ENCODE measurements at regions of chr1 and their contacts with region 1.

Region 1: DNA sequence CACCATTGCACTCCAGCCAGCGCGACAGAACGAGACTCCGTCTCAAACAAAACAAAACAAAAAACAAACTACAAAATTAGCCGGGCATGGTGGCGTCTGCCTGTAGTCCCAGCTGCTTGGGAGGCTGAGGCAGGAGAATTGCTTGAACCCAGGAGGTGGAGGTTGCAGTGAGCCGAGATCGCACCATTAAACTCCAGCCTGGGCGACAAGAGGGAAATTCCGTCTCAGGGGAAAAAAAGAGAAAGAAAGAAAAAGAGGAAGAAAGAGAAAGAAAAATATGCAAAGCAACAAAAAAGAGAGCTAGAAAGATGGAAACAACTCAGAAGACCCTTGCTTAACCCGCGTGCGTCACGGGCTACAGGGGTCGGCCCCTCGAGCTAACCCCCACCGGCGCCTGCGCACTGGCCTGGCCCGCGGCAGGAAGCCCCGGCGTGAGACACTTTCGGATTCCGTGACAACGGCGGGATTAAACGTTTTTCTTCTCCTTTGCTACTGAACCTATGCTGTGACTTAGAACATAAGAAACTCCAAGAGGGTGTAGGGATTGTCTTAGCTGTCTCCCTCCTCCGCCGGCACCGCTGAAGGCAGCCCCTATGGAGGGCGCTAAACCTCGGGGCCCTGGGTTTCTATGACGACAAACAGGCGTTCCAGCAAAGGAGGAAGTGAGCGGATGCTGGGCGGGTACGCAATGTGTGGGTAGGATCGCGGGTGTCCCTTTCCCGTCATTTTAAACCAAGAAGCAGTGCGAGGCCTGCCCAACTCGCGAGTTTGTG is at the start of gene AXDND1:
- DNase-seq: peak; percentile 93
- H3K4me3 Mint-ChIP-seq: peak within 1 kb of the TSS; percentile 95
- H3K27ac Mint-ChIP-seq: peak within 1 kb of the TSS; percentile 100
- H3K4me1 Mint-ChIP-seq: peaks cover 12% of the 10 kb centered on the region
- H3K27me3 Mint-ChIP-seq: no peaks in the 10 kb centered on the region
- total RNA-seq, gene AXDND1: 0.48 to 0.51 TPM

Region 2: DNA sequence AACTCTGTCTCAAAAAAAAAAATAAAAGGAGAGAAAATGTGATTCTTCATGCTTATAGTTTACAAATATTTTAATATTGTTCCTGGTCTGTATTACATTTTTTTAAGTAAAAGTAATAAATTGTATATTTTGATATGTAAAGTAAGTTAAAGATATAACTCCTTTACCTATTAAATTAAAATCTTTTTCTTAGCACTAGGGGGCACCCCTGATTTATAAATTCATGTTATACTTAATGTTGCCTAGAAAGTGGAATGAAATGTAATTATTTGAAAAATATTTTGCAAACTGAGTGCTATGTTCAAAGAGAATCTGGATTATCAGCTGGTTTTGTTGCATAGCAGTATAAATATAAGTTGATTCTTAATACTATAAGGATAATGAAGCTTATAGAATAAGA is 591.2 kb before region 1 on chr1:
- CTCF ChIA-PET with region 1: no interaction called
- POLR2A ChIA-PET with region 1: no interaction called
- intact Hi-C with region 1: loop called (anchors 2 kb)
- DNase-seq: no peak
- H3K4me3 Mint-ChIP-seq: no peak overlapping the region
- H3K27ac Mint-ChIP-seq: no peak overlapping the region
- H3K4me1 Mint-ChIP-seq: no peaks in the 10 kb centered on the region
- H3K27me3 Mint-ChIP-seq: no peaks in the 10 kb centered on the region

Region 3: GRCh38 chr1:179052776-179053175 is 312.7 kb before region 1 on chr1:
- CTCF ChIA-PET with region 1: no interaction called
- POLR2A ChIA-PET with region 1: no interaction called
- intact Hi-C with region 1: no loop called
- DNase-seq: no peak
- H3K4me3 Mint-ChIP-seq: no peak overlapping the region
- H3K27ac Mint-ChIP-seq: no peak overlapping the region
- H3K4me1 Mint-ChIP-seq: no peaks in the 10 kb centered on the region
- H3K27me3 Mint-ChIP-seq: no peaks in the 10 kb centered on the region

Region 4: DNA sequence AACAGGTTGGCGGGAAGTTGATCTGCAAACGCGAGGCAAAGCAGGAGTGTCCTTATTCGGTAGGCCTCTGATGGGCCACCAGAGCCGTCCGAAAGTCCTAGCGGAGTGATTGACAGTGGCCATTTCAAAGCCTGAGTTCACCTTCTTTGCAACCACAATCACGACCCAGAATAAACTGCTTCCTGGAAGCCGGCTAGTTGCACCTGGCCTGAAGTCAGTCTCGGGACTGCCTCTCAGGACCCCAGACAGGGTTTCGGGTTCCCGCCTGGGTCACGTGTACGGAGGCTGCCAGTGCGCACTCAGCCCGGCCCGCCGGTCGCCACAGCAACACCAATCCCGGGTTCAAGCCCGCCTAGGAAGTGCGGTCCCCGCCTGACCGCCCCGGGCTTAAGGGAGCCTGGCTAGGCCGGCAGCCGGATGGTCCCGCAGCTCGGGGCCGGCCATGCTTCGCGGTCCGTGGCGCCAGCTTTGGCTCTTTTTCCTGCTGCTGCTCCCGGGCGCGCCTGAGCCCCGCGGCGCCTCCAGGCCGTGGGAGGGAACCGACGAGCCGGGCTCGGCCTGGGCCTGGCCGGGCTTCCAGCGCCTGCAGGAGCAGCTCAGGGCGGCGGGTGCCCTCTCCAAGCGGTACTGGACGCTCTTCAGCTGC is 283.7 kb before region 1 on chr1 and contains the start of gene TOR3A:
- CTCF ChIA-PET with region 1: interaction called, 75 read pairs
- POLR2A ChIA-PET with region 1: interaction called, 4 read pairs
- intact Hi-C with region 1: loop called (anchors 1 kb)
- DNase-seq: peak; percentile 89
- H3K4me3 Mint-ChIP-seq: peak within 1 kb of the TSS; percentile 89
- H3K27ac Mint-ChIP-seq: peak within 1 kb of the TSS; percentile 91
- H3K4me1 Mint-ChIP-seq: peaks cover 23% of the 10 kb centered on the region
- H3K27me3 Mint-ChIP-seq: no peaks in the 10 kb centered on the region
- total RNA-seq, gene TOR3A: 35.7 to 36.7 TPM

Region 5: GRCh38 chr1:179129702-179130473 is 235.6 kb before region 1 on chr1:
- CTCF ChIA-PET with region 1: interaction called, 6 read pairs
- POLR2A ChIA-PET with region 1: no interaction called
- intact Hi-C with region 1: loop called (anchors 1 kb)
- DNase-seq: peak; percentile 27
- H3K4me3 Mint-ChIP-seq: peak overlapping the region; percentile 59
- H3K27ac Mint-ChIP-seq: peak overlapping the region; percentile 82
- H3K4me1 Mint-ChIP-seq: peaks cover 24% of the 10 kb centered on the region
- H3K27me3 Mint-ChIP-seq: no peaks in the 10 kb centered on the region

Region 6: GRCh38 chr1:179229214-179230140 is 136.0 kb before region 1 on chr1 and contains the start of gene ABL2:
- CTCF ChIA-PET with region 1: interaction called, 3 read pairs
- POLR2A ChIA-PET with region 1: interaction called, 4 read pairs
- intact Hi-C with region 1: loop called (anchors 1 kb)
- DNase-seq: peak; percentile 60
- H3K4me3 Mint-ChIP-seq: peak within 1 kb of the TSS; percentile 90
- H3K27ac Mint-ChIP-seq: peak within 1 kb of the TSS; percentile 80
- H3K4me1 Mint-ChIP-seq: peaks cover 34% of the 10 kb centered on the region
- H3K27me3 Mint-ChIP-seq: no peaks in the 10 kb centered on the region
- total RNA-seq, gene ABL2: 8.8 to 9.1 TPM

Region 7: GRCh38 chr1:179293340-179294327 is 71.9 kb before region 1 on chr1 and contains the start of gene SOAT1:
- CTCF ChIA-PET with region 1: interaction called, 14 read pairs
- POLR2A ChIA-PET with region 1: interaction called, 3 read pairs
- intact Hi-C with region 1: loop called (anchors 1 kb)
- DNase-seq: peak; percentile 95
- H3K4me3 Mint-ChIP-seq: peak within 1 kb of the TSS; percentile 97
- H3K27ac Mint-ChIP-seq: peak within 1 kb of the TSS; percentile 91
- H3K4me1 Mint-ChIP-seq: peaks cover 41% of the 10 kb centered on the region
- H3K27me3 Mint-ChIP-seq: no peaks in the 10 kb centered on the region
- total RNA-seq, gene SOAT1: 37.8 to 42.9 TPM

Region 8: GRCh38 chr1:179322557-179322956 is 42.9 kb before region 1 on chr1:
- CTCF ChIA-PET with region 1: no interaction called
- POLR2A ChIA-PET with region 1: no interaction called
- intact Hi-C with region 1: loop called (anchors 5 kb)
- DNase-seq: no peak
- H3K4me3 Mint-ChIP-seq: no peak overlapping the region
- H3K27ac Mint-ChIP-seq: no peak overlapping the region
- H3K4me1 Mint-ChIP-seq: peaks cover 33% of the 10 kb centered on the region
- H3K27me3 Mint-ChIP-seq: no peaks in the 10 kb centered on the region

Region 9: DNA sequence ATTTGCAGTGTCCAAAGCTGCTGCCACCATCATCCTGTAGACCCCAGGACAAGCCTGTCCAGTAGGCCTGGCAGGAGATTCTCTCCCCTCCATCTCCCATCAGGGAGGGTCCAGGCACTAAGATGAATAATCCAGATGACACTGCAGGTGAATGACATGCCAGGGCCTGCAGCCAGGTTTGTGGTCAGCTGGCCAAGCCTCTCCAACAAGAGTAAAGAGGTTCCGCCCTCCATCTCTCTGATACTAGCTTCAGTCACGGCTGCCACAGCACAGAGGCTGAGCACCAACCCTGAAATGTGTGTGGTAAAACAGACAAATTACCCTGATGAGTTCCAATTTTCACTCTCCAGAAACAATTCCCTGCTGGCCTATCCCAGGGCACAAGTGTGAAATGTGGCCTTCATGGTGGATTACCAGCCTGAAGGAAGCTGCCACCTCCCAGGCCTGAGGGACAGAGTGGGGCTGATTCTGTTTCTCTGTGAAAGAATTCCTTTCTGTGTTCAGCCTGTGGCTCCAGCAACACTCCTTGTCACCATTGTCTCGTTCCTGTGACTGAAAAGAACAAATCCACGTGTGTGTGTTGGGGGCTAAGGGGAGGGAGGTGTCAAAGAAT is 844.6 kb after region 1 on chr1:
- CTCF ChIA-PET with region 1: no interaction called
- POLR2A ChIA-PET with region 1: no interaction called
- intact Hi-C with region 1: no loop called
- DNase-seq: no peak
- H3K4me3 Mint-ChIP-seq: no peak overlapping the region
- H3K27ac Mint-ChIP-seq: no peak overlapping the region
- H3K4me1 Mint-ChIP-seq: peaks cover 9% of the 10 kb centered on the region
- H3K27me3 Mint-ChIP-seq: peaks cover 5% of the 10 kb centered on the region